ENCODE measurements at regions of chr3 and their contacts with region 1.

Region 1: DNA sequence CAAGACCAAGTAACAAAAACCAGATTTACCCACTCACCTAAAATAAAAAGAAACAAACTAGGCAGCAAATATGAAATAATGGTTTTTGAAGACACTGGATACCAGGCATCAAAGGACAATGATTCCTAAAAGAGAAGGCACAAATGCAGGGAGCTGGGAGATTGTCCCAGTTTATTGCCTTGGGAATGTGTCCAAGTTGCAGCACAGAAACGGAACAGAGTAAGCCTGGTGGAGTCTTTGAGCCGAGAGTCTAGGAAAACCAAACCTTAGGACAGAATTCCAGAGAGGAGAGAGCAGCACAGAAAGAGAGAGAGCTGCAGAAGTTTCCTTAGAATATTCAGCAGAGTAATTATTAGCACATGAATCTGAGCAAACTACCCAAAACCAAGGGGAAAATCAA is 7.8 kb upstream of the ARF4 start:
- DNase-seq: no peak
- ATAC-seq: no peak
- H3K4me3 ChIP-seq: no peak overlapping the region
- H3K4me3 Mint-ChIP-seq: no peak overlapping the region
- H3K27ac ChIP-seq: no peak overlapping the region
- H3K27ac Mint-ChIP-seq: no peak overlapping the region
- H3K4me1 ChIP-seq: no peaks in the 10 kb centered on the region
- H3K4me1 Mint-ChIP-seq: peaks cover 5 to 9% (median 6%) of the 10 kb centered on the region in 3 donors
- H3K27me3 ChIP-seq: no peaks in the 10 kb centered on the region
- H3K27me3 Mint-ChIP-seq: no peaks in the 10 kb centered on the region

Region 2: GRCh38 chr3:57354768-57355167 is 250.2 kb before region 1 on chr3:
- CTCF ChIA-PET with region 1: no interaction called
- POLR2A ChIA-PET with region 1: no interaction called
- DNase-seq: no peak
- ATAC-seq: peak in 1 of 4 experiments; percentile 54
- H3K4me3 ChIP-seq: no peak overlapping the region
- H3K4me3 Mint-ChIP-seq: no peak overlapping the region
- H3K27ac ChIP-seq: no peak overlapping the region
- H3K27ac Mint-ChIP-seq: no peak overlapping the region
- H3K4me1 ChIP-seq: peaks cover 0 to 3% of the 10 kb centered on the region in 2 experiments
- H3K4me1 Mint-ChIP-seq: peaks cover 5 to 8% (median 7%) of the 10 kb centered on the region in 3 donors
- H3K27me3 ChIP-seq: peaks cover 0 to 3% of the 10 kb centered on the region in 2 experiments
- H3K27me3 Mint-ChIP-seq: no peaks in the 10 kb centered on the region

Region 3: DNA sequence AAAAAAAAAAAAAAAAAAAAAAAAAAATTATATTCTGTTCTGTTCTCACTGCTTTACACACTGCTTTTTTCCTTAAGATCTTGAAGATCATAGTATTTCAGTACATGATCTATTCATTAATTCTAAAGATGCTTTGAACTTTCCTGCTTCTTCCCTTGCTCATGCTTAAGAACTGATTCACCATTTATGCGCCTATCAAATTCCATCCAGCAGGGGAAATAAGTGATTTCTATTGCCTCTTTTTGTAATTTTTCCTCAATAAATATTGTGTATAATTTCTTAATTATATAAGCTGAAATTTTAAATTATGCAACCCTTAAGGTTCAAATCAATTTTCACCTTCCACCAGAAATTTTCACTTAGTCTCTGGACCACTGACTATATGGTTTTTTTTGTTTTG is 77.3 kb after region 1 on chr3:
- CTCF ChIA-PET with region 1: interaction called in 1 of 2 experiments, 11 read pairs
- POLR2A ChIA-PET with region 1: no interaction called
- DNase-seq: no peak
- ATAC-seq: no peak
- H3K4me3 ChIP-seq: no peak overlapping the region
- H3K4me3 Mint-ChIP-seq: peak overlapping the region in 1 of 3 donors; percentile 26
- H3K27ac ChIP-seq: no peak overlapping the region
- H3K27ac Mint-ChIP-seq: no peak overlapping the region
- H3K4me1 ChIP-seq: peaks cover 13 to 37% of the 10 kb centered on the region in 2 experiments
- H3K4me1 Mint-ChIP-seq: peaks cover 77 to 80% (median 80%) of the 10 kb centered on the region in 3 donors
- H3K27me3 ChIP-seq: no peaks in the 10 kb centered on the region
- H3K27me3 Mint-ChIP-seq: no peaks in the 10 kb centered on the region

Measured in T-cell (primary cell).